ENCODE measurements at regions of chr6 and their contacts with region 1.

Region 1: DNA sequence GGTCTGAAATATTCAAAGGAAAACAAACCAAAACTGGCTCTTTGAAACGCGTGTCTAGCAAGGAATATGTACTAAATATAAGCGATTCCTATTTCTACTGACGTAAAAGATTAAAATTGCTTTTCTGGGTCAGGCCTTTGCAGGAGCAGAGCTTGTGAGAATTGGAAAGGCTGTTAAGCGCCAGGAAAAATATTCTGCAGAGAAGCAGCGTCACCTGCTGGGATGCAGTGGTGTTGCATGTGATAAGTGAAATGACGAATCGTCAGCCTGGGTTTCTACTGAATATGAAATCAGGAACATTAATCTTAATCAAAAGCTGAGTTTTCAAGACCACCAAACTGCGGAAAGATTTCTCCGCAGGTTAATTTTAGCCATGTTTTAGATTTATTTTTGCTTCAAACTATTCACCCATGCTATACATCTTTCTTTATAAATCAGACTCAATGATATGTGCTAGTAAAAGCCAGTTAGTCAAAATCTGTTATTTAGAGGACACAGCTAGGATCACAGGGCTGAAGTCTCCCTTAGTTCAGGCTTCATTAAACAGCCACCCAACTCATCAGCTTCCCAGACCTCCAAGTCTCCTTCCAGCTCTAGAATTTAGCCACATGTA is 67.4 kb downstream of the ALDH8A1 start:
- DNase-seq: peak; percentile 59 to 95 (median 77)

Region 2: DNA sequence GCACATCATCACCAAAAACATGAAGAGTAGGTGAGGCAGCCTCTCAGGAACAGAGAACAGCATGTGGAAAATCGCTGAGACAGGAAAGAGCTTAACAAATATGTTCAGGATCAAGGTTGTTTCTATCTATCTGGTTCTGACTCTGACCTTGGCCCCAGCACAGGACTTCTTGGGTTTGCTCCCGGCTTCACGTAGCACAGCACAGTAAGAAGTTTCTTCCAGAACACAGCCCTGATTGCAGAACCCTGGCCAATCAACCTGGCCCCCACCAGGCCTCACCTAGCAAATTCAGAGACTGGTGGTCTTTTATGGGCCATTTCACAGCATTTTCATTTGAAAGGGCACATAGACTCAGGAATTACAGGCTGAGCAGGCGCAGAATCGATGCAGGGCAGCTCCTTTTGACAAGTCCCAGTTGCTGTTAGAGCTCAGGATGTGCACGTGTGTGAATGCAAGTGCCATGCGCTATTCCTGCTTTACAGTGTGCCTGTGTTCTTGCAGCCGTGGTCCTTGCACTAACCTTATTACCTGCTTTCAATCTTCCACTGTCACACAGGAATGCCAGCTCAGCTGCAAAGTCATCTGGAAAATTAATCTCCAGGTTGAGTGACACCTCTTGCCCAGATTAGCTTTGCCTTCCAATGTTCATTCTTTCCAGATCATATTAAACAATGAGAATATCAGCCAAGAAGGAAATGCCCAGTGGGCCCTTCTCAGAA is 729.6 kb before region 1 on chr6:
- intact Hi-C with region 1: loop called (anchors 2 kb)
- DNase-seq: no peak

Region 3: DNA sequence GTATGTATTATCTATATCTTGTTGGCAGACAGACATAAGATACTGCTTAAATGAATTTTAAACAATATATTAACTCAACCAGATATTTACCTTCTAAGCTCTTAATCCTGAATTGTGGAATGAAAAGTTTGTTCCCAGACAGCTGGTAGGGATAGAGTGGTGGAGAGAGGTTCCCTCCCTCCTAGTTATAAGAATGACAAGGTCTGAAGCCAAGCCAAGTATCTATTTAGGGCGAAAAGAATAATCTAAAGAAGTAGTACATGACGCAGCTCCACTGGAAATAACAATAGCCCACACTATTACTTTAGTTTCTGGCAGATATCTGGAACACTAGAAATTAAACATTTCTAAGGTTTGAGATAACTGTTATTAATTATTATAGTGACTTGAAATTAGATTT is 510.8 kb after region 1 on chr6:
- intact Hi-C with region 1: no loop called
- DNase-seq: no peak

Measured in posterior cingulate gyrus (tissue), 11 donors.